ENCODE measurements at regions of chr5 and their contacts with region 1.

Region 1: GRCh38 chr5:140362860-140363630 is 3.1 kb downstream of the SLC4A9 start:
- DNase-seq: peak; percentile 74 to 79 (median 77)
- H3K4me3 ChIP-seq: peak overlapping the region in 1 of 2 donors; percentile 52
- H3K4me3 Mint-ChIP-seq: peak overlapping the region; percentile 71 to 84 (median 76)
- H3K27ac ChIP-seq: no peak overlapping the region
- H3K27ac Mint-ChIP-seq: peak overlapping the region in 5 of 7 donors; percentile 40 to 72 (median 59)
- H3K4me1 ChIP-seq: peaks cover 9% of the 10 kb centered on the region
- H3K4me1 Mint-ChIP-seq: peaks cover 3 to 12% (median 6%) of the 10 kb centered on the region in 4 donors
- H3K27me3 ChIP-seq: no peaks in the 10 kb centered on the region
- H3K27me3 Mint-ChIP-seq: peaks cover 0 to 2% of the 10 kb centered on the region in 2 donors

Region 2: DNA sequence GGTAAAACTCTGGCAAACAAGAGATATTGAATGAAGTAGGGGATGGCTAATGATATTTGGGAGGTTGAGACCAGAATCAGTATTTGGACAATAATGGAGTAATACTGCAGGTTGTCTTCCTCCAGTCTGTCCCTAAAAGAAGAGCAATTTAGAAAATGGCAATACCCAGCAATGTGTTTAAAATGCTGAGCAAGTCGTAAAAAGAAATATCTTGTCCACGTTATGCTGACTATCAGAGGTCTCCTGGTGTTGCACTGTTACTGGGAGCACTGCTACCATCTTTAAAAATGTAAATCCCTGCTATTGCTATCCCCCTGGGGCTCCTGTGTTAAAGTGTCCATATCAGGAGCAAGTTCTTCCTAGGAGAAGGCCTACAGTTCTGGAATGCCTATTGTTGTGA is 177.6 kb before region 1 on chr5:
- CTCF ChIA-PET with region 1: no interaction called
- POLR2A ChIA-PET with region 1: no interaction called
- intact Hi-C with region 1: no loop called
- DNase-seq: no peak
- H3K4me3 ChIP-seq: no peak overlapping the region
- H3K4me3 Mint-ChIP-seq: no peak overlapping the region
- H3K27ac ChIP-seq: no peak overlapping the region
- H3K27ac Mint-ChIP-seq: no peak overlapping the region
- H3K4me1 ChIP-seq: peaks cover 3% of the 10 kb centered on the region
- H3K4me1 Mint-ChIP-seq: peaks cover 0 to 3% (median under 1%) of the 10 kb centered on the region in 4 donors
- H3K27me3 ChIP-seq: no peaks in the 10 kb centered on the region
- H3K27me3 Mint-ChIP-seq: peaks cover 0 to 2% of the 10 kb centered on the region in 2 donors

Region 3: DNA sequence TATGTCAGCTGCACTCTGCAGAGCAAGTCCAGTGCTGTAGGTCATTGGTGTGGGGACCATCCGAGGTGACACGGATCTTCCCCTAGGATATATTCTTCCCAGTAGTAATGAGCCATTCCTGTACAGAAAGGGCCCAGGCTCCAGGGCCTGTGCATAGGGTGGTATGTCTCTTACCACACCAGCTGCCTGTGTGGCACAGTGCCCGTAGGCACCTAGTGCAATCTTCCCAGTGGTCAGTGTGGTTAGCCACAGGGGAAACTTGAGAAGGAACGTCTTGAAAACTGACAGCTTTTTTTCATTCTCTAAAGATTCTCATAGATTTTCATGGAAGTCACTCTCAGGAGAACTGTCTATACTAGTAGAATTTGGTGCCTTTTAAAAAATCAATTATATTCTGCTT is 148.2 kb before region 1 on chr5:
- CTCF ChIA-PET with region 1: no interaction called
- POLR2A ChIA-PET with region 1: no interaction called
- intact Hi-C with region 1: no loop called
- DNase-seq: no peak
- H3K4me3 ChIP-seq: no peak overlapping the region
- H3K4me3 Mint-ChIP-seq: no peak overlapping the region
- H3K27ac ChIP-seq: no peak overlapping the region
- H3K27ac Mint-ChIP-seq: peak overlapping the region in 1 of 7 donors; percentile 15
- H3K4me1 ChIP-seq: no peaks in the 10 kb centered on the region
- H3K4me1 Mint-ChIP-seq: peaks cover 0 to 12% (median 4%) of the 10 kb centered on the region in 4 donors
- H3K27me3 ChIP-seq: no peaks in the 10 kb centered on the region
- H3K27me3 Mint-ChIP-seq: no peaks in the 10 kb centered on the region

Region 4: GRCh38 chr5:140718241-140718580 is 355.2 kb after region 1 on chr5:
- CTCF ChIA-PET with region 1: interaction called, 28 read pairs
- POLR2A ChIA-PET with region 1: no interaction called
- intact Hi-C with region 1: loop called (anchors 1 kb)
- DNase-seq: no peak
- H3K4me3 ChIP-seq: no peak overlapping the region
- H3K4me3 Mint-ChIP-seq: peak overlapping the region in 2 of 8 donors; percentile 5 to 63
- H3K27ac ChIP-seq: no peak overlapping the region
- H3K27ac Mint-ChIP-seq: peak overlapping the region in 1 of 7 donors; percentile 46
- H3K4me1 ChIP-seq: no peaks in the 10 kb centered on the region
- H3K4me1 Mint-ChIP-seq: peaks cover under 1 to 2% (median 1%) of the 10 kb centered on the region in 4 donors
- H3K27me3 ChIP-seq: no peaks in the 10 kb centered on the region
- H3K27me3 Mint-ChIP-seq: no peaks in the 10 kb centered on the region

Region 5: DNA sequence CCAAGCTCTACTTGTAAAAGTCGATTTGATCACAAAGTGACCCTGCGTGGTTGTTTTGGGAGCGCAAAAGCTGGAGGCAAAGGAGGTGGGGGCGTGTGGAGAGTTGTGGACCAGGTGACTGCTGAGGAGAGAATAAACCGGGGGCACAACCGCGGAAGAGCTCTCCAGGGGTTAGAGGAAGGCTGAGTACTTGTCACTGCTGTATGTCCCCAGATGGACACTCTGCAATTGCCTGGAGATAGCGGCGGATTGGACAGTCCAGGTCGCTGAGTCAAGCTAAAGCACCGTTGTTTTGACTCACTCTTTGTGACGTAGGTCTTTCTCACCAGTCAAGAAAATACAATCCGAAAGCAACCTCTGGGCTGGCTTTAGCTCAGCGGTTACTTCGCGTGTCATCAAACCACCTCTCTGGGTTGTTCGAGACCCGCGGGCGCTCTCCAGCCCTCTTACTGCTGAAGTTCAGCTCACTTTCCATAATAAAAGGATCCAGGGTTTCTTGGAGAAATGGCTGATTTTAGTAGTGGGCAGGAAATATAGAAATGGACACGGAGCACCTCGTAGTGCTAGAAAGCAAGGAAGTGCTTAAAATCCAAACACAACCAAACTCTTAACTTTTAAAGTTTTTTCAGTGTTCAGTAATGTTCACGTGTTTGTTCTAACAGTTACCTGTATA is 362.9 kb after region 1 on chr5:
- CTCF ChIA-PET with region 1: interaction called, 24 read pairs
- POLR2A ChIA-PET with region 1: no interaction called
- intact Hi-C with region 1: no loop called
- DNase-seq: peak; percentile 61 to 88 (median 63)
- H3K4me3 ChIP-seq: peak overlapping the region; percentile 39 to 42
- H3K4me3 Mint-ChIP-seq: peak overlapping the region; percentile 75 to 90 (median 81)
- H3K27ac ChIP-seq: no peak overlapping the region
- H3K27ac Mint-ChIP-seq: peak overlapping the region; percentile 37 to 99 (median 74)
- H3K4me1 ChIP-seq: peaks cover 6% of the 10 kb centered on the region
- H3K4me1 Mint-ChIP-seq: peaks cover 9 to 25% (median 17%) of the 10 kb centered on the region in 4 donors
- H3K27me3 ChIP-seq: no peaks in the 10 kb centered on the region
- H3K27me3 Mint-ChIP-seq: peaks cover 3 to 11% of the 10 kb centered on the region in 2 donors

Region 6: GRCh38 chr5:140800816-140801493 is 437.9 kb after region 1 on chr5 and contains the start of gene PCDHA3:
- CTCF ChIA-PET with region 1: no interaction called
- POLR2A ChIA-PET with region 1: no interaction called
- intact Hi-C with region 1: no loop called
- DNase-seq: peak in 1 of 5 donors; percentile 9
- H3K4me3 ChIP-seq: no peak within 1 kb of the TSS
- H3K4me3 Mint-ChIP-seq: no peak within 1 kb of the TSS
- H3K27ac ChIP-seq: no peak within 1 kb of the TSS
- H3K27ac Mint-ChIP-seq: peak within 1 kb of the TSS in 2 of 7 donors; percentile 53 to 64
- H3K4me1 ChIP-seq: no peaks in the 10 kb centered on the region
- H3K4me1 Mint-ChIP-seq: no peaks in the 10 kb centered on the region
- H3K27me3 ChIP-seq: peaks cover 5% of the 10 kb centered on the region
- H3K27me3 Mint-ChIP-seq: peaks cover 7 to 18% of the 10 kb centered on the region in 2 donors
- total RNA-seq, gene PCDHA3: not detected

Region 7: GRCh38 chr5:141040771-141041426 is 677.9 kb after region 1 on chr5:
- CTCF ChIA-PET with region 1: no interaction called
- POLR2A ChIA-PET with region 1: no interaction called
- intact Hi-C with region 1: loop called (anchors 5 kb)
- DNase-seq: peak; percentile 64 to 74 (median 71)
- H3K4me3 ChIP-seq: no peak overlapping the region
- H3K4me3 Mint-ChIP-seq: no peak overlapping the region
- H3K27ac ChIP-seq: no peak overlapping the region
- H3K27ac Mint-ChIP-seq: no peak overlapping the region
- H3K4me1 ChIP-seq: peaks cover 14% of the 10 kb centered on the region
- H3K4me1 Mint-ChIP-seq: no peaks in the 10 kb centered on the region
- H3K27me3 ChIP-seq: no peaks in the 10 kb centered on the region
- H3K27me3 Mint-ChIP-seq: peaks cover 5 to 6% of the 10 kb centered on the region in 2 donors

Measured in CD4-positive, alpha-beta memory T cell (primary cell).